MCF 10A (cell line): ENCODE measurements at regions of chr1 and their contacts with region 1.

Region 1: GRCh38 chr1:153698020-153698931 is 19.8 kb downstream of the NPR1 start:
- DNase-seq: no peak
- H3K4me3 Mint-ChIP-seq: no peak overlapping the region
- H3K27ac Mint-ChIP-seq: no peak overlapping the region
- H3K4me1 Mint-ChIP-seq: peaks cover 17% of the 10 kb centered on the region
- H3K27me3 Mint-ChIP-seq: no peaks in the 10 kb centered on the region
- CTCF ChIP-seq: no peak

Region 2: DNA sequence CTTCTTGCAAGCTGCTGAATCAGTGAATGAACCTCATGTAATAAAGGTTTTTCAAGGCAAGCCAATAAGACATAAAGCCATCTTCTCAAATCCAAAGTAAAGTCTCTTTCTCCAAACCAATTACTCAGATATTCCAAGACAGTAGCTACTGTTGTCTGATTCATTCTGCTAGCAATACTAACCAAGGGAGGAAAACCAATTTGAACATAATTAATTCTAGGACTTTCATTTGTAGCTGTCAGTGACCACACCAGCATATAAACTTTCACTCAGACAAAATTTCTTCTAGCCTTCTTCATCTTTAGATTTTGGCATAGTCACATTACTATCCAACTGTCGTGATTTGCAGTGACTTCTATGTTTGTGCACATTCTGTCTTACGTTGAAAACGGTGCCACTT is 19.1 kb after region 1 on chr1:
- CTCF ChIA-PET with region 1: interaction called, 3 read pairs
- POLR2A ChIA-PET with region 1: no interaction called
- intact Hi-C with region 1: loop called (anchors 1 kb)
- DNase-seq: no peak
- H3K4me3 Mint-ChIP-seq: no peak overlapping the region
- H3K27ac Mint-ChIP-seq: no peak overlapping the region
- H3K4me1 Mint-ChIP-seq: no peaks in the 10 kb centered on the region
- H3K27me3 Mint-ChIP-seq: no peaks in the 10 kb centered on the region
- CTCF ChIP-seq: no peak

Region 3: DNA sequence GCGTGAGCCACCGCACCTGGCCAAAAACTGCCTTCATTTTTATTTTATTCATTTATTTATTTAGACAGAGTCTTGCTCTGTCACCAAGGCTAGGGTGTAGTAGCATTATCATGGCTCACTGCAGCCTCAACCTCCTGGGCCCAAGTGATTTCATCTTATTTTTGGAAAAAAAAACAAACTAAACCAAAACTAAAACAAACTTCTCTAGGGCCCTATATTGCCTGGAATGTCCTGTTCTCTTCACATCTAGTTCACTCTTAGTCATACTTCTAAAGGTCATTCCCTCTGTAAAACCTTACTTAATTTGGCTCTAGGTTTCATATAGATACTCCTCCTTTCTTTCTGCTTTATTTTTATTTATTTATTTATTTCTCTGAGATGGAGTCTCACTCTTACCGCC is 307.9 kb after region 1 on chr1:
- CTCF ChIA-PET with region 1: no interaction called
- POLR2A ChIA-PET with region 1: no interaction called
- intact Hi-C with region 1: no loop called
- DNase-seq: peak; percentile 30
- H3K4me3 Mint-ChIP-seq: no peak overlapping the region
- H3K27ac Mint-ChIP-seq: no peak overlapping the region
- H3K4me1 Mint-ChIP-seq: no peaks in the 10 kb centered on the region
- H3K27me3 Mint-ChIP-seq: no peaks in the 10 kb centered on the region
- CTCF ChIP-seq: no peak